AG04449 (cell line): ENCODE measurements at regions of chr1 and their contacts with region 1.

Region 1: DNA sequence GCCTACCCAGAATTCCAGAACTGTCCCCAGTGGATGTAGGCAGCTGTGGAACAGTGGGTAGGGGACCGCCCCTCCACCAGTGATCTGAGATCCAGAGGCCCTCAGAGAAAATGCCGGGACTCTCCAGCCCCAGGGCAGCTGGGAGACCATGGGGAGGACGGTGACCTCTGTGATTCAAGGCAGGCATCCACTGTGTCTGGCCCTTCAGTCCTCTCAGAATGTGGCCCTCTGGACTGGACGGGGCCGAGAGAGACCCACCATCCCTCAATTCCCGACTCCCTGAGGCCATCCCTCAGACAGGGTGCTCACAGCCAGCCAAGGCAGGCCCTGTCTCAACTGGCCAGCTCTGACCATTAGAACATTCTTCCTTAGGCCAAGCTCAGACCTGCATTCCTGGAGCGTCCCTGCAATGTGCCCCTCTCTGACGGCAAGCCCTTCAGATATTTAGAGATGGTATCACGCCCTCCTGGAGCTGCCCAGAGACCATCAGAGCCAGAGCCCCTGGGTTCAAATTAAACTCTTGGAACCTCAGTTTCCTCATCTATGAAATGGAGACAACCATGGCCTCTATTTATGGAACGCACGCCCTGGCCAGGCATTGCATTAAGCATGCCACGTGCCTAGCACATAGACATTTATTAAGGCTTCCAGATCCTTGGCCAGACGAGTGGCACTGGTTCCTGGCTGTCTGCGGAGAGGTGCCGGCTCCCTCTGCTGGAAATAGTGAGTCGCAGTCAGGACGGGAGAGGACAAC is 9.6 kb upstream of the EPS8L3 start:
- DNase-seq: peak; percentile 40
- H3K4me3 ChIP-seq: no peak overlapping the region
- CTCF ChIP-seq: peak; percentile 96

Region 2: GRCh38 chr1:109655601-109656519 is 117.5 kb before region 1 on chr1 and contains the start of gene GSTM4:
- CTCF ChIA-PET with region 1: interaction called, 228 read pairs
- POLR2A ChIA-PET with region 1: no interaction called
- DNase-seq: no peak
- H3K4me3 ChIP-seq: peak within 1 kb of the TSS; percentile 78
- CTCF ChIP-seq: peak; percentile 18

Region 3: DNA sequence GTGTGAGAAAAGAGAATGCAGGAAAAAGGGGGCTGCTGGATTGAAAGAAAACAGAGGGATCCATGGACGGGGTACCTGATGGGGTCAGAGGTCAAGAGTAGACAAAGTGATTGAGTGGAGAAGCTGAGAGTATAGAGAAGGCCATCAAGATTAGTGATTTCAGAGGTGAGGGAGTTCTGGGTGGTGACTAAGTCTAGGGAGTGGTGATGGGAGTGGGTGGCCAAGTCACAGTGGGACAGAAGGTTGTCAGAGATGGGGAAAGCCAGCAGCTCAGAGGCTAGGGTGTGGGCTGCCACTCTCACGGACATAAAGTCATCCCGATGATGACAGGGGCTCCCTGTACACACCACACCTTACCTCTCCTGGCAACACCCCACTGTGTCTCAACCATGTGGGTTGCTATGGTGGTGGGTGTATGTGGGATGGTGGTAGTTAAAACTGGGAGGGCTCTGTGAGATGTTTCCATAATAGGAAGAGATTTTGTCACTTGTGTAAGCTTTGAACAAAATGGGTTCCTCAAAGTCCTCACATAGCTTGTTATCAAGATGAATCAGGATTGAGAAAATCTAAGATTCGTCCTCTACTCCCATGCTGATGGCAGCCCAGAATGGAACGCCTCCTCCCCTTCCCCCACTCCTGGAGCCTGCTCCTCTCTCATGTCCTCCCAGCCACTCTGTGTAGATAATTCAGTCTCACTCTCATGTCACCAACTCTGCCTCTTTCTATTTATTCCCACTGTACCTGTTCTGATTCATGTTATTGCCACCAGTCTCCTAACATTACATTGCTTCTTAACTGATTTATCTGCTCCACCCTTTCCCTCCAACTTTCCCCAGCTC is 117.0 kb after region 1 on chr1:
- CTCF ChIA-PET with region 1: interaction called, 11 read pairs
- POLR2A ChIA-PET with region 1: no interaction called
- DNase-seq: no peak
- H3K4me3 ChIP-seq: no peak overlapping the region
- CTCF ChIP-seq: no peak

Region 4: GRCh38 chr1:109993885-109994284 is 220.6 kb after region 1 on chr1:
- CTCF ChIA-PET with region 1: interaction called, 1,425 read pairs
- POLR2A ChIA-PET with region 1: no interaction called
- DNase-seq: no peak
- H3K4me3 ChIP-seq: no peak overlapping the region
- CTCF ChIP-seq: no peak

Region 5: DNA sequence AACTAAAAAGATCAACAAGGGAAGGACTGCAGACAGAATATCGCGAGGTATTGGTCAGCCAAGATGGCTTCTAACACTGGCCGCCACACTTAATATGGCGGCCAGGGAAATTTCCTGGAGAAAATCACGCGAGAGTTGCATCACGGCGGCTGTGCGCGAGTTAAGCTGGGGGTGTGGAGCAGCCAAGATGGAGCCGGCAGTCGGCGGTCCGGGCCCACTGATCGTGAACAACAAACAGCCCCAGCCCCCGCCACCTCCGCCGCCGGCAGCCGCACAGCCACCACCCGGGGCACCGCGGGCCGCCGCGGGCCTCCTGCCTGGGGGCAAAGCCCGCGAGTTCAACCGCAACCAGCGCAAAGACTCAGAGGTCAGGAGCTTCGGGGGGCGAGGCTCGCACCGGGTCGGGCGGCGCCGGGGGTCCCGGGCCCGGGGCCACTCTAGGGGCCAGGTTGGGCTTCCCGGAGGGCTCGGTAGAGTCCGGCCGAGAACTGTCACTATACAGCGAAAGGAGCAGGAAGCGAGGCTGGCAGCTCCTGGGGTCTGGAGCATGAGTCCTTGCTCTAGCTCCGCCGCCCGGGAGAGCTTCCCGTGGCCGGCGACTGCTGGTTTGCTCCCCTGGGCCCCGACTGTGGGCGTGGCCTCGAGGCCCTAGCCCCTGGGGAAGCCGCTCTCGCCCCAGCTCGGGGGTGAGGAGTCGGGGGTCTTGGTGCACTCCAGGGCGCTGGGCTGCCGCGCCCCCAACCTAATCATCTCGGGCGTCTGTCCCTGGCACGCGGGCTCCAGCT is 261.3 kb after region 1 on chr1 and contains the start of gene STRIP1:
- CTCF ChIA-PET with region 1: interaction called, 15 read pairs
- POLR2A ChIA-PET with region 1: no interaction called
- DNase-seq: peak; percentile 78
- H3K4me3 ChIP-seq: peak within 1 kb of the TSS; percentile 84
- CTCF ChIP-seq: no peak